GM12878 (cell line): ENCODE measurements at regions of chr11 and their contacts with region 1.

Region 1: GRCh38 chr11:73625696-73626318 is 20.6 kb upstream of the PLEKHB1 start:
- DNase-seq: peak; percentile 23
- ATAC-seq: peak; percentile 98
- H3K4me3 ChIP-seq: no peak overlapping the region
- H3K27ac ChIP-seq: no peak overlapping the region
- H3K4me1 ChIP-seq: no peaks in the 10 kb centered on the region
- H3K27me3 ChIP-seq: no peaks in the 10 kb centered on the region
- CTCF ChIP-seq: peak; percentile 83 to 91 (median 84)
- EP300 ChIP-seq: no peak
- POLR2A ChIP-seq: no peak
- RAD21 ChIP-seq: peak; percentile 82

Region 2: GRCh38 chr11:73453562-73453961 is 172.2 kb before region 1 on chr11:
- CTCF ChIA-PET with region 1: interaction called, 14 read pairs
- POLR2A ChIA-PET with region 1: no interaction called
- RAD21 ChIA-PET with region 1: interaction called, 3 read pairs
- SMC1A ChIA-PET with region 1: interaction called, 3 read pairs
- in situ Hi-C with region 1: no loop called
- intact Hi-C with region 1: no loop called
- DNase-seq: no peak
- ATAC-seq: no peak
- H3K4me3 ChIP-seq: no peak overlapping the region
- H3K27ac ChIP-seq: no peak overlapping the region
- H3K4me1 ChIP-seq: no peaks in the 10 kb centered on the region
- H3K27me3 ChIP-seq: no peaks in the 10 kb centered on the region
- CTCF ChIP-seq: no peak
- EP300 ChIP-seq: no peak
- POLR2A ChIP-seq: no peak
- RAD21 ChIP-seq: no peak

Region 3: GRCh38 chr11:73578592-73579185 is 47.1 kb before region 1 on chr11:
- CTCF ChIA-PET with region 1: interaction called, 10 read pairs
- POLR2A ChIA-PET with region 1: no interaction called
- RAD21 ChIA-PET with region 1: interaction called, 3 read pairs
- SMC1A ChIA-PET with region 1: interaction called, 3 read pairs
- in situ Hi-C with region 1: no loop called
- intact Hi-C with region 1: no loop called
- DNase-seq: peak; percentile 37
- ATAC-seq: peak; percentile 89
- H3K4me3 ChIP-seq: no peak overlapping the region
- H3K27ac ChIP-seq: peak overlapping the region; percentile 54; the same call in 1 of the 2 replicates
- H3K4me1 ChIP-seq: peaks cover 20% of the 10 kb centered on the region
- H3K27me3 ChIP-seq: no peaks in the 10 kb centered on the region
- CTCF ChIP-seq: no peak
- EP300 ChIP-seq: no peak
- POLR2A ChIP-seq: no peak
- RAD21 ChIP-seq: no peak

Region 4: GRCh38 chr11:73636249-73636648 is 10.4 kb after region 1 on chr11:
- CTCF ChIA-PET with region 1: interaction called, 17 read pairs
- POLR2A ChIA-PET with region 1: interaction called, 6 read pairs
- RAD21 ChIA-PET with region 1: interaction called, 4 read pairs
- SMC1A ChIA-PET with region 1: interaction called, 7 read pairs
- in situ Hi-C with region 1: no loop called
- intact Hi-C with region 1: no loop called
- DNase-seq: no peak
- ATAC-seq: no peak
- H3K4me3 ChIP-seq: no peak overlapping the region
- H3K27ac ChIP-seq: no peak overlapping the region
- H3K4me1 ChIP-seq: no peaks in the 10 kb centered on the region
- H3K27me3 ChIP-seq: no peaks in the 10 kb centered on the region
- CTCF ChIP-seq: no peak
- EP300 ChIP-seq: no peak
- POLR2A ChIP-seq: no peak
- RAD21 ChIP-seq: no peak

Region 5: DNA sequence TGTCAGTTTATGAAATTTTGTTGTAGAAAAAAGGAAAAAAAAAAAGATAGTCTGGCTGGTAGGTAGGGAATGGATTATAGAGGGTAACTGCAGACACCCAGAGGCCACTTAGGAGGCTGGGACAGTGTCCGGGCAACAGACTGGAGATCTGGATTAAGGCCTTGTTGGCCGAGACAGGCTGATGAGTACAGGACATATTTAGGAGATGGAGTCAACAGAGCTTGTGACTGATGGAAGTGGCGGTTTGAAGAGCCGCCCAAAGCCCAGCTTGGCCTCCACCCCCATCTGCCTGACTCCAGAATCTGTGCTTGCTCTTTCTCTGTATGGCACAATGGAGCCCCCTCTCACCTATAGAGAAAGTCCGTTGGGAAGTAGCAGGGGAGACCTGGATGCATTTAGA is 28.2 kb after region 1 on chr11:
- CTCF ChIA-PET with region 1: interaction called, 173 read pairs
- POLR2A ChIA-PET with region 1: no interaction called
- RAD21 ChIA-PET with region 1: interaction called, 64 read pairs
- SMC1A ChIA-PET with region 1: interaction called, 79 read pairs
- in situ Hi-C with region 1: no loop called
- intact Hi-C with region 1: no loop called
- DNase-seq: no peak
- ATAC-seq: no peak
- H3K4me3 ChIP-seq: no peak overlapping the region
- H3K27ac ChIP-seq: no peak overlapping the region
- H3K4me1 ChIP-seq: no peaks in the 10 kb centered on the region
- H3K27me3 ChIP-seq: no peaks in the 10 kb centered on the region
- CTCF ChIP-seq: no peak
- EP300 ChIP-seq: no peak
- POLR2A ChIP-seq: no peak
- RAD21 ChIP-seq: no peak

Region 6: DNA sequence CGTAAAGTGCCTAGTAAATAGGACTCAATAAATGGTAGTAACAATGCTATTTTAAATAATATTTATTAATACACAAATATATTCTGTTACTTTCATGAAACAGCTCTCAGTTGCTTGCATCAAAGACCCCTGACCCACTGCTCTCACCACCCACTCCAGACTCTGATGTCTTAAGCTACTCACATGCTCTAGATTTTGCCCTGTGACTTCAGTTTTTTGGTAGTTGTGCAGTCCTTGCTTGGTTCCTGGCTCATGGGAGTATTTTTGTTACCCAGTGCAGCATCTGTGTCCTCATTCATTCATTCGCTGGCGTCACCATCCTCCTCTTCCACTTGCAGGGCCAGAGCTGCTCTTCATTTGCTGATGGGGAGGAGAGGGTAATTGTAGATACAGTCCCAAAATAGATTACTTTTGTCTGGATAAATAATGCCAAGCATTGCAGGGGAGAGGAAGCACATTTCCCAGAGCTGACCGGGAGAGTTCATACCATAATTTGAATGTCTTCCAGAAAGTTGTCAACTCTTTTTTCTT is 174.5 kb after region 1 on chr11:
- CTCF ChIA-PET with region 1: no interaction called
- POLR2A ChIA-PET with region 1: no interaction called
- RAD21 ChIA-PET with region 1: no interaction called
- SMC1A ChIA-PET with region 1: no interaction called
- in situ Hi-C with region 1: no loop called
- intact Hi-C with region 1: no loop called
- DNase-seq: no peak
- ATAC-seq: no peak
- H3K4me3 ChIP-seq: no peak overlapping the region
- H3K27ac ChIP-seq: no peak overlapping the region
- H3K4me1 ChIP-seq: no peaks in the 10 kb centered on the region
- H3K27me3 ChIP-seq: no peaks in the 10 kb centered on the region
- CTCF ChIP-seq: no peak
- EP300 ChIP-seq: no peak
- POLR2A ChIP-seq: no peak
- RAD21 ChIP-seq: no peak

Region 7: GRCh38 chr11:73931039-73931645 is 305.3 kb after region 1 on chr11:
- CTCF ChIA-PET with region 1: interaction called, 29 read pairs
- POLR2A ChIA-PET with region 1: no interaction called
- RAD21 ChIA-PET with region 1: interaction called, 29 read pairs
- SMC1A ChIA-PET with region 1: interaction called, 16 read pairs
- in situ Hi-C with region 1: no loop called
- intact Hi-C with region 1: loop called (anchors 5 kb)
- DNase-seq: no peak
- ATAC-seq: peak; percentile 78
- H3K4me3 ChIP-seq: no peak overlapping the region
- H3K27ac ChIP-seq: no peak overlapping the region
- H3K4me1 ChIP-seq: no peaks in the 10 kb centered on the region
- H3K27me3 ChIP-seq: no peaks in the 10 kb centered on the region
- CTCF ChIP-seq: peak in 2 of 3 experiments; percentile 37 to 60; a peak in 3 of 6 replicates
- EP300 ChIP-seq: no peak
- POLR2A ChIP-seq: no peak
- RAD21 ChIP-seq: peak; percentile 47; the same call in 1 of the 2 replicates